ENCODE measurements at regions of chr11 and their contacts with region 1.

Region 1: DNA sequence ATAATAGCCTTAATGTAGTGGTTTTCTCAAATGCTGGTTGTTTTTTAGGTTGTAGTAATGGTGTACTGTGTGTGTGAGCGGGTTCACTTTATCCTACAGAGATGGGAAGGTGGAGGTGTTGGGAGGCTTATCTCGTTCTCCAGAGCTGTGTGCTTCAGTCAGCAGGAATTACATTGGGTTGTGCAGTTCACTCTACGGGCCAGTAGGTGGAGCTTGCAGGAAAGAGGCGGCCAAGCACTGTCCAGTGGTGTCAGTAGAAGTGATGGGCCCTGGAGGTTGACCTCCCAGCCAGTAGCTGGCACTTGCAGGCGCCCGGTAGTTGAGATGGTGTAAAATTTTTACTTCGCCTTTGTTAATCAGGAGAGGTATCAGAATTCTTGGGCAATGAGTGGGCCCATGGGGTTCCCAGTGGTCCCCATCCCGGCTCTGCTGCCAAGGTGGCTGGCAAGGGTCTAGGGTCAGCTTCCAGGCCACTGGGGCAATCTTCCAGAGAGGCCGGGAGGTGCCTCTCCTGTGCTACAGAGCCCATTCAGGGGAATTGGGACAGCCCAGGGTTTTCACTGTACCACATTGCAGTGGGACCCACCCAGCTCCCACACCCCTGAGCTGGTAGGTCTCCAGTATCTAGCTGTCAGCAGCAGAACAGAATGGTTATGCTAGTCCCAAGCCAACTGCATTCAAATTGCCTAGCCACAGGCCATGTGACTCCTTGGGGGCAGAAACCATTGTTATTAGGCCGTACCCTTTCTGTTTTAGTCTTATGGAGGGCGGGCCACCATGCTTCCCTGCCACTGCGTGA is 43.9 kb downstream of the BIRC2 start:
- DNase-seq: peak; percentile 71
- H3K4me3 Mint-ChIP-seq: no peak overlapping the region
- H3K27ac Mint-ChIP-seq: peak overlapping the region; percentile 62
- H3K4me1 Mint-ChIP-seq: peaks cover 5% of the 10 kb centered on the region
- H3K27me3 Mint-ChIP-seq: no peaks in the 10 kb centered on the region
- CTCF ChIP-seq: peak; percentile 81

Region 2: GRCh38 chr11:102287964-102288724 is 102.7 kb before region 1 on chr11:
- CTCF ChIA-PET with region 1: interaction called, 34 read pairs
- POLR2A ChIA-PET with region 1: no interaction called
- intact Hi-C with region 1: loop called (anchors 1 kb)
- DNase-seq: peak; percentile 80
- H3K4me3 Mint-ChIP-seq: no peak overlapping the region
- H3K27ac Mint-ChIP-seq: no peak overlapping the region
- H3K4me1 Mint-ChIP-seq: peaks cover 19% of the 10 kb centered on the region
- H3K27me3 Mint-ChIP-seq: no peaks in the 10 kb centered on the region
- CTCF ChIP-seq: peak; percentile 63

Region 3: DNA sequence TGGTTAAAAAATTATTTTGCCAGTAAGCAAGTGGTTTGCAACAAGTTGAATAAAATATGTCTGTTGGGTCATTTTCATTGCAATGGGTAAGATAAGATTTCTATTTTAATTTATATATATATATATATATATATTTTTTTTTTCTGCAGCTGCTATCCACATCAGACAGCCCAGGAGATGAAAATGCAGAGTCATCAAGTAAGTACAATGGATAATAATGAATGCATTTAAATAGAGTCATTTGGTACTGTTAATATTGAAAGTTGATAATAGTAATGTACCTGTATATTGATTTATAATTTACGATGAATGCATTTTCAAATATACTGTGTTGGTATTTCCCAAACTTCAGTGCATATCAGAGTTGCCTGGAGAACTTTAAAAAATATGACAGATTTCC is 62.1 kb before region 1 on chr11:
- CTCF ChIA-PET with region 1: no interaction called
- POLR2A ChIA-PET with region 1: no interaction called
- intact Hi-C with region 1: no loop called
- DNase-seq: no peak
- H3K4me3 Mint-ChIP-seq: no peak overlapping the region
- H3K27ac Mint-ChIP-seq: no peak overlapping the region
- H3K4me1 Mint-ChIP-seq: peaks cover 17% of the 10 kb centered on the region
- H3K27me3 Mint-ChIP-seq: no peaks in the 10 kb centered on the region
- CTCF ChIP-seq: no peak

Region 4: DNA sequence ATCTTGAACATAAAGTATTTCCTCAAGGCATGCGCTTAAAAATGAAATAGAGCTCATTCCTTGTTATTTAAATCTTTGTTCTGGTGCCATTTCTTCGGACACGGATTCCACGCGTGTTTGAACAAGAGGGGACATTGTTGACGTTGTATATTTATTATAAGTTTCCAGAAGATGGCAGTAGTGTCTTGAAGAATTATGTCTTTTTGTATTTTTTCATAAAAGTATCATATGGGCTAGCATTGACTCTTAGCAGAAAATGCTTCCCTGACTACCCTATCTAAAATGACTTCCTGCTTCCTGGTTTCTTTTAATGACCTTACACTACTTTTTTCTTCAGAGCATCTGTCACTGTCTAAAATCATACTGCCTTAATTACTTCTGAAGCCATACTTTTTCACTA is 23.5 kb before region 1 on chr11:
- CTCF ChIA-PET with region 1: interaction called, 15 read pairs
- POLR2A ChIA-PET with region 1: no interaction called
- intact Hi-C with region 1: no loop called
- DNase-seq: peak; percentile 10
- H3K4me3 Mint-ChIP-seq: no peak overlapping the region
- H3K27ac Mint-ChIP-seq: peak overlapping the region; percentile 32
- H3K4me1 Mint-ChIP-seq: no peaks in the 10 kb centered on the region
- H3K27me3 Mint-ChIP-seq: no peaks in the 10 kb centered on the region
- CTCF ChIP-seq: no peak

Region 5: DNA sequence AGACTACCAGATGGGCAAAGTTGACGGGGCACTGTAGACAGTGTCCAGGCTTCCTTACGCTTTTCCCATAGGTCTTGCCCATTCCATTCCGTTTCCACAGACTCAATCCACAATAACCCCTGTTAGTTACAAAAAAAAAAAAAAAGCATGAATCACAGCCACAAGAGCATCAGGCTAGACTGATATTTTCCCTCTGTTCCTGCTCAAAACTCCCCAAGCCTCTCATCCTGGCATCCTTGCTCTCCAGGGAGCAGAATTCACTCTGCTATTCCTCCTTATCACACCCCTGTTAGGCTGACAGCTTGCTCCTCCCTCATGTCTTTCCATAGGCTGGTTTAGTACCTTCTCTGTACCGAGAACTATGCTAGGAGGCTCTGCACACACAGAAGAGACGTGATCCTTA is 19.5 kb after region 1 on chr11:
- CTCF ChIA-PET with region 1: interaction called, 56 read pairs
- POLR2A ChIA-PET with region 1: interaction called, 5 read pairs
- intact Hi-C with region 1: no loop called
- DNase-seq: no peak
- H3K4me3 Mint-ChIP-seq: no peak overlapping the region
- H3K27ac Mint-ChIP-seq: no peak overlapping the region
- H3K4me1 Mint-ChIP-seq: peaks cover 17% of the 10 kb centered on the region
- H3K27me3 Mint-ChIP-seq: no peaks in the 10 kb centered on the region
- CTCF ChIP-seq: no peak

Region 6: GRCh38 chr11:102451681-102452460 is 61.0 kb after region 1 on chr11:
- CTCF ChIA-PET with region 1: interaction called, 5 read pairs
- POLR2A ChIA-PET with region 1: interaction called, 5 read pairs
- intact Hi-C with region 1: loop called (anchors 2 kb)
- DNase-seq: peak; percentile 62
- H3K4me3 Mint-ChIP-seq: peak overlapping the region; percentile 94
- H3K27ac Mint-ChIP-seq: peak overlapping the region; percentile 90
- H3K4me1 Mint-ChIP-seq: peaks cover 35% of the 10 kb centered on the region
- H3K27me3 Mint-ChIP-seq: no peaks in the 10 kb centered on the region
- CTCF ChIP-seq: no peak

Region 7: GRCh38 chr11:102495161-102496042 is 104.5 kb after region 1 on chr11:
- CTCF ChIA-PET with region 1: interaction called, 43 read pairs
- POLR2A ChIA-PET with region 1: interaction called, 4 read pairs
- intact Hi-C with region 1: loop called (anchors 1 kb)
- DNase-seq: peak; percentile 93
- H3K4me3 Mint-ChIP-seq: no peak overlapping the region
- H3K27ac Mint-ChIP-seq: no peak overlapping the region
- H3K4me1 Mint-ChIP-seq: peaks cover 17% of the 10 kb centered on the region
- H3K27me3 Mint-ChIP-seq: no peaks in the 10 kb centered on the region
- CTCF ChIP-seq: no peak

Measured in MCF 10A (cell line).